Activated T-helper 1 cell treated with anti-CD3 and anti-CD28 coated beads, Interleukin-12 subunit alpha, Interleukin-12 subunit beta, Interleukin-2, Interleukin-4 antibody, amounts not matched to agents 30 ng/mL and 10 ng/mL and 1 ng/mL, durations not matched to agents 14 hours and 24 hours and 36 hours (primary cell): ENCODE measurements at regions of chr20 and their contacts with region 1.

Region 1: GRCh38 chr20:38893565-38894090 is 32.6 kb upstream of the FAM83D start:
- DNase-seq: peak; percentile 71
- H3K4me3 Mint-ChIP-seq: no peak overlapping the region
- H3K27ac Mint-ChIP-seq: peak overlapping the region; percentile 91
- H3K4me1 Mint-ChIP-seq: peaks cover 62% of the 10 kb centered on the region
- H3K27me3 Mint-ChIP-seq: no peaks in the 10 kb centered on the region

Region 2: GRCh38 chr20:38446441-38447209 is 447.0 kb before region 1 on chr20:
- intact Hi-C with region 1: no loop called
- DNase-seq: peak; percentile 88
- H3K4me3 Mint-ChIP-seq: peak overlapping the region; percentile 84
- H3K27ac Mint-ChIP-seq: peak overlapping the region; percentile 80
- H3K4me1 Mint-ChIP-seq: peaks cover 38% of the 10 kb centered on the region
- H3K27me3 Mint-ChIP-seq: peaks cover 8% of the 10 kb centered on the region

Region 3: DNA sequence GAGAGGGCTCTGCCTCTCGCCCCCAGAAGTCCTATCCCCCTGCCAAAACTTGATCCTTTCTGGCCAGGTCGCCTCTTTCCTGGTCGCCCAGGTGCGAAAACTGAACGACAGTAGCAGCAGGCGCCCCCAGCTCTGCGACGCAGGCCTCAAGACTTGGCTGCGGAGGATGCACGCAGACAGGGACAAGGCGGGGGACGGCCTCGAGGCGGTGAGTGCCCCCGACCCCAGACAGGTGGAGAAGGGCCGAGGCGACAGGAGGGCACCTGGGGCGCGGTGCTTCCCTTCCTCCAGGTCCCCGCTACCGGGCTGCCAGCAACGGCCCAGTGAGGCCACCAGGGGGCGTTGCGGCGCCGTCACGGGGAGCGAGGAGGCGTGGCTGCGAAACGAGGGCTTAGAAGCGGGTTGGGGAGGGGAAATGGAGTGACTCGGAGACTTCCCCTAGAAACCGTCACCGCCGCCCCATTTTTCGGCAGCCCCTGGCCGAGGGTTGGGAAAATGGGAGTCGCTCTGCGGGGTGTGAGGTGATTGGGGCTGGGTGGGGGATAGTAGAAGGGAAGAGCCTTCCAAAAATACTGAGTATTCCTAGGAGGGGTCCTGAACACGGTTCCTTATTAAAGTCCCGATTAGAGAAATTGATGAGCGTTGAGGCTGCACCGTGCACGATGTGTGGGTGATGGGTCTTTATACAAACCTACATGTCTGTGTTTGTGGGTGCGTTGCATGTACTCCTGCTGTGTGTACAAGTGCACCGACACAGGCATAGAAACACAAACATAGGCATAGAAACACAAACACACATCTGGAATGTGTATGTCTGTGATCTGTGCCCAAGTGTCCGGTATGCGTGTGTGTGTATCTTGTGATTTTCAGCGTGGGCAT is 247.4 kb before region 1 on chr20:
- intact Hi-C with region 1: loop called (anchors 1 kb)
- DNase-seq: peak; percentile 87
- H3K4me3 Mint-ChIP-seq: peak overlapping the region; percentile 82
- H3K27ac Mint-ChIP-seq: no peak overlapping the region
- H3K4me1 Mint-ChIP-seq: peaks cover 9% of the 10 kb centered on the region
- H3K27me3 Mint-ChIP-seq: peaks cover 34% of the 10 kb centered on the region

Region 4: DNA sequence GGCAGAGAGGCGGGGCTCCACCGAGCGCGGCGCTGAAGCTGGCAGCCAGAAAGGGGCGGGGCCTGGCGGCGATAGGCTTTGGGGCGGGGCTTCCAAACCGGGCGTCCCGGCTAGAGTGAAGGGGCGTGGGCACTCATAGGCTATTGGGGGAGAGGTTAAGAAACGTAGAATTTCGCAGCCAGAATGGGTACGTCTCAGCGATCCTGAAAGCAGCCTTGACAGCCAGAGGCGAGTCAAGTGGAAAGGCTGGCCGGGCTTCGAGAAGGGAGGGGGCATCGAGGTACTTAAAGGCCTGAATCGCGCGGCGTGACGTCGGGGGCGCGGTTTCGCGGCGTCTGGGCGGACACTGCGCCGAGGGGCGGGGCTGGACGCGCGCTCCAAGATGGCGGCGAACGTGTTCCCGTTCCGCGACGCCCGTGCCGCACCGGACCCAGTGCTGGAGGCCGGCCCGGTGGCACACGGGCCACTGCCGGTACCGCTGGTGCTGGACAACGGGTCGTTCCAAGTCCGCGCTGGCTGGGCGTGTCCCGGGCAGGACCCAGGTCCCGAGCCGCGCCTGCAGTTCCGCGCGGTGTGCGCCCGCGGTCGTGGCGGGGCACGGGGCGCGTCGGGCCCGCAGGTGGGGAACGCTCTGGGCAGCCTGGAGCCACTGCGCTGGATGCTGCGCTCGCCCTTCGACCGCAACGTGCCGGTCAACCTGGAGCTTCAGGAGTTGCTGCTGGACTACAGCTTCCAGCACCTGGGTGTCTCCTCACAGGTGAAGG is 145.3 kb before region 1 on chr20 and contains the start of gene ACTR5:
- intact Hi-C with region 1: loop called (anchors 1 kb)
- DNase-seq: peak; percentile 94
- H3K4me3 Mint-ChIP-seq: peak within 1 kb of the TSS; percentile 94
- H3K27ac Mint-ChIP-seq: peak within 1 kb of the TSS; percentile 98
- H3K4me1 Mint-ChIP-seq: peaks cover 37% of the 10 kb centered on the region
- H3K27me3 Mint-ChIP-seq: peaks cover 8% of the 10 kb centered on the region
- total RNA-seq, gene ACTR5: 14.9 and 15.2 TPM in 2 replicates

Region 5: GRCh38 chr20:38790200-38791053 is 103.2 kb before region 1 on chr20:
- intact Hi-C with region 1: loop called (anchors 1 kb)
- DNase-seq: peak; percentile 25
- H3K4me3 Mint-ChIP-seq: no peak overlapping the region
- H3K27ac Mint-ChIP-seq: no peak overlapping the region
- H3K4me1 Mint-ChIP-seq: peaks cover 7% of the 10 kb centered on the region
- H3K27me3 Mint-ChIP-seq: no peaks in the 10 kb centered on the region

Region 6: GRCh38 chr20:38833857-38834164 is 59.8 kb before region 1 on chr20:
- intact Hi-C with region 1: loop called (anchors 2 kb)
- DNase-seq: no peak
- H3K4me3 Mint-ChIP-seq: peak overlapping the region; percentile 47
- H3K27ac Mint-ChIP-seq: peak overlapping the region; percentile 87
- H3K4me1 Mint-ChIP-seq: peaks cover 54% of the 10 kb centered on the region
- H3K27me3 Mint-ChIP-seq: no peaks in the 10 kb centered on the region

Region 7: DNA sequence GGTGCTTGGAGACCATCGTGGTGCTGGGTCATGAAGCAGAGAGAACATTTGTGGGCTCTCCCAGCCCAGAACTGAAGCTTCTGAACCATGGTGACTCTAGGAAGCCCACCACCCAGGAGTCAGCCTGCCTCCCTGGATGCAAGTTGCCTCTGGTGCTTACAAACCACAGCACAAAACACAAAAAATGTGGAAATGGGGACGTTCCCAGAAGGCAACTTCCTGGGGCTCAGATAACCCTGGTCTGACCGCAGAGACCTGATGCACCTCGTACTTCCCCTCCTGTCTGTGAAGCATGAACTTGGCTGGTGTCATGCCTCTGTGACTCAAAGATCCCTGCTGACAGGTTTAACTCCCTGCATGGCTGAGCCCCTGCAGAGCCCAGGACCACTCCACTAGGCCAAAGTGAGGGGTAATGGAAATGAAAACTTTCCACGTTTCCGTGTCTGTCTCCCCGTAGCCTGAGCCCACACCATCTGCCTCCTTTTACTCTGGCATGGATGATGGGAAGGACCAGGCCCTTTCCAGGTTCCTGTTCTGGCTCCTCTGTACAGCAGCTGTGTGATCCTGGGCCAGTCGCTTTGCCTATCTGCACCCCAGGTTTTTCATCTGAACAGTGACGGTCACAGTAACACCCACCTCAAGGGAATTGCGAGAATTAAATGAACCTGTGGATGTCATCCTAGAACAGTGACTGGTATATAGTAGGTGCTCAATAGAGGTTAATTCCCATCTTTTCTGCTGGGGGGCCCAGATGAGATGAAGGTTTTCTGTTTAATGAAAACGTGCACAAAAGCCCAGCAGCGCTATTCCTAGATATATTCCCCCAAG is 30.4 kb before region 1 on chr20:
- intact Hi-C with region 1: loop called (anchors 5 kb)
- DNase-seq: peak; percentile 45
- H3K4me3 Mint-ChIP-seq: peak overlapping the region; percentile 50
- H3K27ac Mint-ChIP-seq: peak overlapping the region; percentile 89
- H3K4me1 Mint-ChIP-seq: peaks cover 68% of the 10 kb centered on the region
- H3K27me3 Mint-ChIP-seq: peaks cover 1% of the 10 kb centered on the region

Region 8: GRCh38 chr20:38973645-38974044 is 80.0 kb after region 1 on chr20:
- intact Hi-C with region 1: no loop called
- DNase-seq: no peak
- H3K4me3 Mint-ChIP-seq: no peak overlapping the region
- H3K27ac Mint-ChIP-seq: no peak overlapping the region
- H3K4me1 Mint-ChIP-seq: peaks cover 6% of the 10 kb centered on the region
- H3K27me3 Mint-ChIP-seq: no peaks in the 10 kb centered on the region